CD8-positive, alpha-beta T cell (primary cell): ENCODE measurements at regions of chr9 and their contacts with region 1.

Region 1: DNA sequence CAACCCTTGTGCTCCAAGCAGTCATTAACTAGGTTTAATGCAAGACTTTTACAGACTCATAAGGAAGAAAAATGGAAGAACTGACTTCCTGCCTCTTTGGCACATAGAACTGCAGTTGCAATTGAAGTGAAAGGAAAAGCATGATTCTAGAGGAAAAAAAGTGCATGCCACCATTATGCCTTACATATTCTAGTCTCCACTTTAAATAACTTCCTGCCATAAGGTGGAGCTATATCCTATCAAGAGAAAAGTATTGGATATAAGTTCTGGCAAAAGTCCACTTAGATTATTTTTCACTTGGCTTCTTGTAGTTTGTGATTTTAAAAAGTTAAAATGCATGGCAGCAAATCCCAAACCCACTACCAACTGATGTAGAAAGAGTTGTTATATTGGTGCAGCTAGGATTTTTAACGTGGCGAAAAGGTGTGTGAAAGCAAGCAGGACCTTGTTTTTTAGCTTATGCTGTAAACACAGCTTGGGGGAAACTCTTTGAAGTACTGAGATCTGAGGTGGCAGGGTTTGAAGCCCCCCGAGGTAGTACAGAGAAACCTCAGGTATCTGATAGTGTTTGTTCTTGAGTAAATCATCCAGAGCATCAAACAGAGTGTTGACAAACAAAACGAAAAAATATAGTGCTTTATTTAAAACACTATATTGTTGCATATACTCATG is 117.9 kb downstream of the ANXA1 start:
- DNase-seq: no peak
- ATAC-seq: no peak
- H3K4me3 ChIP-seq: no peak overlapping the region
- H3K4me3 Mint-ChIP-seq: no peak overlapping the region
- H3K27ac ChIP-seq: no peak overlapping the region
- H3K27ac Mint-ChIP-seq: no peak overlapping the region
- H3K4me1 ChIP-seq: no peaks in the 10 kb centered on the region
- H3K4me1 Mint-ChIP-seq: no peaks in the 10 kb centered on the region
- H3K27me3 ChIP-seq: no peaks in the 10 kb centered on the region
- H3K27me3 Mint-ChIP-seq: no peaks in the 10 kb centered on the region
- CTCF ChIP-seq: no peak

Region 2: GRCh38 chr9:73327149-73327548 is 57.6 kb after region 1 on chr9:
- CTCF ChIA-PET with region 1: no interaction called
- POLR2A ChIA-PET with region 1: no interaction called
- intact Hi-C with region 1: loop called in 1 of 2 experiments (anchors 10 kb)
- DNase-seq: no peak
- ATAC-seq: no peak
- H3K4me3 ChIP-seq: no peak overlapping the region
- H3K4me3 Mint-ChIP-seq: no peak overlapping the region
- H3K27ac ChIP-seq: no peak overlapping the region
- H3K27ac Mint-ChIP-seq: no peak overlapping the region
- H3K4me1 ChIP-seq: no peaks in the 10 kb centered on the region
- H3K4me1 Mint-ChIP-seq: no peaks in the 10 kb centered on the region
- H3K27me3 ChIP-seq: no peaks in the 10 kb centered on the region
- H3K27me3 Mint-ChIP-seq: no peaks in the 10 kb centered on the region
- CTCF ChIP-seq: no peak